Thyroid gland (tissue), 4 donors: ENCODE measurements at regions of chr14 and their contacts with region 1.

Region 1: GRCh38 chr14:66568220-66568619 is 60.3 kb downstream of the GPHN start:
- DNase-seq: no peak
- H3K4me3 ChIP-seq: no peak overlapping the region
- H3K27ac ChIP-seq: no peak overlapping the region
- H3K4me1 ChIP-seq: no peaks in the 10 kb centered on the region
- H3K27me3 ChIP-seq: no peaks in the 10 kb centered on the region
- CTCF ChIP-seq: peak in 1 of 6 experiments; percentile 16
- POLR2A ChIP-seq: no peak

Region 2: GRCh38 chr14:66495218-66496098 is 72.8 kb before region 1 on chr14:
- intact Hi-C with region 1: loop called (anchors 10 kb)
- DNase-seq: peak; percentile 50 to 51
- H3K4me3 ChIP-seq: no peak overlapping the region
- H3K27ac ChIP-seq: peak overlapping the region in 1 of 3 donors; percentile 56
- H3K4me1 ChIP-seq: no peaks in the 10 kb centered on the region
- H3K27me3 ChIP-seq: no peaks in the 10 kb centered on the region
- CTCF ChIP-seq: peak; percentile 54 to 79 (median 75)
- POLR2A ChIP-seq: no peak

Region 3: DNA sequence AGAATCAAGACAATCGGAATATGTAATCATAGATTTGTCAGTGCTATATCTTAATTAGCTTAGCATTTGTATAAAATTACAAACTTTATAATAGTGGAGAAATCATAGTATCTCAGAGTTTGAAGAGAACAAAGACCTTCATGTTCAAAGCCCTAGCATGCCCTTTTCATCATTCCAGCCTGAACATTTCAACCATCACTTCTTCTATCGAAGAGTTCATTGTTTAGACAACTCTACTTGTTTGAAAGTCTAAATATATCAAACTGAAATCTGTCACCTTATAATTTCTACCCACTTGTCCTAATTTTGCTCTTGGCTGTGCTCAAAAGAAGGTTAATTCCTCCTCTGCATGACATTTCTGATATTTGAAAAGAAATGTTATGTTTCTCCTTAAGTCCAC is 265.6 kb after region 1 on chr14:
- intact Hi-C with region 1: no loop called
- DNase-seq: no peak
- H3K4me3 ChIP-seq: no peak overlapping the region
- H3K27ac ChIP-seq: no peak overlapping the region
- H3K4me1 ChIP-seq: no peaks in the 10 kb centered on the region
- H3K27me3 ChIP-seq: no peaks in the 10 kb centered on the region
- CTCF ChIP-seq: no peak
- POLR2A ChIP-seq: no peak